Right ventricle myocardium inferior (tissue), 1 donor: ENCODE measurements at regions of chr2 and their contacts with region 1.

Region 1: GRCh38 chr2:99337113-99338028 is at the start of gene EIF5B:
- DNase-seq: peak; percentile 98
- ATAC-seq: peak; percentile 93
- total RNA-seq, gene EIF5B: 90.8 TPM

Region 2: DNA sequence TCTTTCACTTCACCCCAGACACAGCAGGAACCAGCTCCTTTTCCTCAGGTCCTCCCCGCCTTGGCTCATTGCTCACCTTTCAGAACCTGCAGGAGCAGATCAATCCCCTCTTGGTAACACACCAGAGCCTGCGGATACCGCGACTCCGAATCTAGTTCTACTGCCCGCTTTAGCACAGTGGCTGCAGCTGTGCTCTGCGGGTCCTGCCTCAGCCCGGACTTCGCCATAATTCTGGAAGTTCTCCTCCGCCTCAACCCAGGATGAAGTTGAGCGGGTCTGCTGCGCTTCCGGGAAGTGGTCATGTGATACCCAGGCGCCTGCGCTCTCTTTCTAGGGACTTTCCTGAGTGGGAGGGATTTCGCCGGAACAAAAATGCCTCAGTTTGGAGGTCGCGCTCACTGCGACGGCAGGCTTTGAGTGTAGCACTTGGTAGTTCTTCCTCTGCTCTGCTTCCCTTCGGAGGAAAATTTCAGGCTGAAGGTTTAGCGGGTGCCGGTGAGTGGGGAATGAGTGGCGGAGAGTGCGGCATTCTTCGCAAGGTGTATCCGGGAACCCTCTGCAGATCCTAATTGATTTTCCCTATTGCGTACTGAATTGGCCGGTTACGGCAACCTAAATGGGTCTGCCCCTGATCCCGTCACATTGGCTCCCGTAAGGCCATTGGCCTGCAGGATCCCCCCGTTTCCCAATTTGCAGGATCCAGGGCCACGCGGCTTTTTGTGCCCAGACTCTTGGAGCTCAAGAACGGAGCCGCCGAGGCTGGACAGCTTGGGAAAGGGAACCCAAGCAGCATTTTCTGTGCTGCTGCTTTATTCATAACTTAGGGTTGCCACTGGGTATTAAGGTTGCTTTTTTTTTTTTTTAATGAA is 156.4 kb before region 1 on chr2 and contains the starts of genes MITD1 and MRPL30:
- intact Hi-C with region 1: loop called (anchors 1 kb)
- DNase-seq: peak; percentile 92
- ATAC-seq: peak; percentile 99
- total RNA-seq, gene MITD1: 17.3 TPM
- total RNA-seq, gene MRPL30: 39.3 TPM

Region 3: DNA sequence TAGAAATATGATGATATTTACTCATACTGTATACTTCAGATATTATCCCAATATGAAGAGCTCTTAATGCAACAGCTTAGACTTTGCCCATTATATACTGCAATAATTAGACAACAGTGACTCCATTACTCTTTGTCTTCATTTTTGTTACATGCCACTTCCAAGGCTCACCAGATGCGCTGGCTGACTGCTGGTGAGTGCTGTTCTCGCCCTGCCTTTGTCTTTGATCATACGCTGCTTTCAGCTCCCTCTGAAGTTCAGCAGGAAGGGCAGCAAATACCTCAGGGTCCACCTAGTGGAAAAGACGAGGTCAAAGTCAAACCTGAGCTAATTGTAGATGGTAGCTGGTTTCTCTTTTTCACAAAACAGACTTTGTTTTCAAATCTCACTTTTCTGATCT is 66.2 kb after region 1 on chr2:
- intact Hi-C with region 1: loop called (anchors 5 kb)
- DNase-seq: no peak
- ATAC-seq: peak; percentile 50

Region 4: DNA sequence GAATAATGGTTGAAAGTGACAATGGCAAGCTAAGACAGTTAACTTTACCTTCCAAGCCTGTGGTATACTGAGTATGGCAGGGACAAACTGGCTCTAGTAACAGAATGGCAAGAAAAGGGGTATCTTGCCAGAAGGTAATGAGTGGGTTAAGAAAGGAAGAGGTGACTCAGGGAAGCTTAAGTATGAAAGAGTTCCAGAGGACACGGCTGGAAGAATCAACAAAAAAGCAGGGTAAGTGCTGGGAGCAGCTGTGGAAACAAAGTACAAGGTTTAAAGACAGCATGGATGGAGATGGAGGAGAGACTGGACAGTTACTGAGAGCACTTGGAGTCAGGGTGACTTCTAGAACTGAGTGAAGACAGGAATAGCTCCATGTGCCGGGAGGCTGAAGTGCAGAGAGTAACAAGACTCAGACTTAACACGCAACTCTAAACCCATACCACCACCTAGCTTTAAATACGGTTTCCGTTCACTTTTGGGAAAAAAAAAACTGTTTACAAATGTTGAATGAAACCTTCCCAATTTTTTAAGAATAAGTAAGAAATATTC is 83.5 kb after region 1 on chr2:
- intact Hi-C with region 1: loop called (anchors 5 kb)
- DNase-seq: no peak
- ATAC-seq: peak; percentile 77

Region 5: DNA sequence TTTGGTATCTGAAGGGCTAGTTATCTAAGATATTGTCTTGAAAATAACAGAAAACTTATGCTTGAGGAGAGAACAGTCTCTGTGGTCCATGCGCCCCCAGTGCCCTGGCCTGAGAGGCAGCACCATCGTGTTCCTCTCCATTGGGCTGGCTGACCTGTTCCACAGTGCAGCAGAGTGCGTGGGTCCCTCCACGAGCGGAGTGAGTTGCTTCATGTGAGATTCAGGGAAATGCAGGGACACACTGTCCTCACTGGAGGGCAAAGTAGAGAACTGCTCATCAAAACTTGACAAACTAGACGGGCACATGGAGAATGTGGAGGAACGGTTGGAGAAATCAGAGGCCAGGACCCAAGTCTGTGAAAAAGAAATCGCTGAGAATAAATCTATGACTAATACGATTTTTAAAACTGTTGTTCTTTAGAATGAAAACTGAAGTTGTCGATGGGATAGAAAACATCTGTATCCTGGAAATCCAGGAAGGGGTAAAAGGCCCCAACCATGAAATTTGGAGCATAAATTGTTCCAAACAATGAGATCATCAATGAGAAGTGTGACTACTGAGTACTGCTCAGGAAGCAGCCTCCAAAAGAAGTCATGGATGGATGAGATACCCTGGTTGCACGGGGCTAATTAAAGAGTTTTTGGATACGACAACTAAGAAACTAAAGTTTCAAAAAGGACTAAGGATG is 94.4 kb after region 1 on chr2:
- intact Hi-C with region 1: no loop called
- DNase-seq: no peak
- ATAC-seq: no peak

Region 6: DNA sequence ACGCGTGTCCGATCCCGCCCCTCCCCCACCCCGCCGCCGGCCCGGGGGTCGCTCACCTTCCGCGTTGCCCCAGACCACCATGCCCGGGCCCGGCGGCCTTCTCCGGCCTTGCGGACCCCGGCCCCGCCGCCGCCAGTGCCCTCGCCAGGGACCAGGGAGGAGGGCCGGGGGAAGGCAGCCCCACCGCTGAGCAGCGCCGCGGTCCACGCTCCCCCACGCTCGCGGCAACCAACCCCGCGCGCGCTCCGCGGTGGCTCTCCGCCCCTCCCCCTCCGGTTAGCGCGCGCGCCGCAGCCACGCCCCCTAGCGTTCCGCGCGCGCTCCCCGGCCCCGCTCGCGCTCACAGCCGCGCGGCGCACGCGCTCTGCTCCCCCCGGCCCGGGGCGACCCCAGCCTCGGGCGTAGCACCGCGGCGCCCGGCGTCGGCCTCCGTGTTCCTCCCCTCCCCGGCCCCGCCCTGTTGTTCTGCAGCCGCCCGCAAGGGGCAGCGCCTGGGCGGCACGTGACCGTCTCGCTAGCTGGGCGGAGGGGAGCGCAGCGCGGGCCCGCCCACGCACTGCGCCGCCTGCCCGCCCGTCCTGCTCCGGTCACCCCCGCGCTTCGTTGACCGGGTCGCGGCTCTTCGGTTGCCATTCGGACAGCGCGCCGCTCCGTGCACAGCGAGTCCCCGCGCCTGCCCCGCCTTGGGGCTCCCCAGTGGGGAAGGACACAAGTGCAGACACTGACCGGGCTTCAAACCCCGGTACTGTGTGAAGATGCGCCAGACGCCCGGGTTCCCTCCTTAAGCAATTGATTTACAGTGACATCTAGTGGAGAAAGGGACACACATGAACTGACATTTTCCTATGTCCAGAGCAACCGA is 152.6 kb after region 1 on chr2 and contains the start of gene REV1:
- intact Hi-C with region 1: loop called (anchors 1 kb)
- DNase-seq: peak; percentile 95
- ATAC-seq: peak; percentile 94
- total RNA-seq, gene REV1: 49.8 TPM